Activated CD4-positive, alpha-beta memory T cell treated with anti-CD3 and anti-CD28 coated beads, Interleukin-2, amount 10 ng/mL, durations not matched to agents 7 days and 5 days (primary cell): ENCODE measurements at regions of chr2 and their contacts with region 1.

Region 1: GRCh38 chr2:219498280-219499057 is at the start of gene GMPPA:
- DNase-seq: peak; percentile 97
- H3K4me3 Mint-ChIP-seq: peak within 1 kb of the TSS; percentile 95
- H3K27ac Mint-ChIP-seq: peak within 1 kb of the TSS; percentile 64
- H3K4me1 Mint-ChIP-seq: peaks cover 48% of the 10 kb centered on the region
- H3K27me3 Mint-ChIP-seq: peaks cover 47% of the 10 kb centered on the region
- total RNA-seq, gene GMPPA: 41.0 to 42.3 TPM

Region 2: GRCh38 chr2:219388127-219388844 is 110.2 kb before region 1 on chr2:
- CTCF ChIA-PET with region 1: interaction called, 15 read pairs
- POLR2A ChIA-PET with region 1: interaction called, 8 read pairs
- DNase-seq: peak; percentile 98
- H3K4me3 Mint-ChIP-seq: peak overlapping the region; percentile 70
- H3K27ac Mint-ChIP-seq: peak overlapping the region; percentile 67
- H3K4me1 Mint-ChIP-seq: peaks cover 16% of the 10 kb centered on the region
- H3K27me3 Mint-ChIP-seq: peaks cover 9% of the 10 kb centered on the region

Region 3: GRCh38 chr2:219402665-219403515 is 95.6 kb before region 1 on chr2:
- CTCF ChIA-PET with region 1: interaction called, 12 read pairs
- POLR2A ChIA-PET with region 1: no interaction called
- DNase-seq: peak; percentile 58
- H3K4me3 Mint-ChIP-seq: no peak overlapping the region
- H3K27ac Mint-ChIP-seq: no peak overlapping the region
- H3K4me1 Mint-ChIP-seq: no peaks in the 10 kb centered on the region
- H3K27me3 Mint-ChIP-seq: peaks cover 10% of the 10 kb centered on the region

Region 4: GRCh38 chr2:219469186-219469724 is 29.2 kb before region 1 on chr2:
- CTCF ChIA-PET with region 1: no interaction called
- POLR2A ChIA-PET with region 1: no interaction called
- DNase-seq: no peak
- H3K4me3 Mint-ChIP-seq: no peak overlapping the region
- H3K27ac Mint-ChIP-seq: no peak overlapping the region
- H3K4me1 Mint-ChIP-seq: no peaks in the 10 kb centered on the region
- H3K27me3 Mint-ChIP-seq: no peaks in the 10 kb centered on the region

Region 5: GRCh38 chr2:219484343-219485200 is 13.9 kb before region 1 on chr2:
- CTCF ChIA-PET with region 1: interaction called, 10 read pairs
- POLR2A ChIA-PET with region 1: interaction called, 3 read pairs
- DNase-seq: no peak
- H3K4me3 Mint-ChIP-seq: no peak overlapping the region
- H3K27ac Mint-ChIP-seq: no peak overlapping the region
- H3K4me1 Mint-ChIP-seq: no peaks in the 10 kb centered on the region
- H3K27me3 Mint-ChIP-seq: peaks cover 41% of the 10 kb centered on the region

Region 6: GRCh38 chr2:219509780-219510511 is 11.5 kb after region 1 on chr2:
- CTCF ChIA-PET with region 1: interaction called, 41 read pairs
- POLR2A ChIA-PET with region 1: interaction called, 6 read pairs
- DNase-seq: peak; percentile 45
- H3K4me3 Mint-ChIP-seq: no peak overlapping the region
- H3K27ac Mint-ChIP-seq: no peak overlapping the region
- H3K4me1 Mint-ChIP-seq: peaks cover 12% of the 10 kb centered on the region
- H3K27me3 Mint-ChIP-seq: peaks cover 44% of the 10 kb centered on the region

Region 7: GRCh38 chr2:219543601-219544358 is 45.3 kb after region 1 on chr2 and contains the starts of genes CHPF and TMEM198:
- CTCF ChIA-PET with region 1: interaction called, 15 read pairs
- POLR2A ChIA-PET with region 1: interaction called, 10 read pairs
- DNase-seq: peak; percentile 95
- H3K4me3 Mint-ChIP-seq: peak within 1 kb of the TSS; percentile 78
- H3K27ac Mint-ChIP-seq: peak within 1 kb of the TSS; percentile 74
- H3K4me1 Mint-ChIP-seq: peaks cover 23% of the 10 kb centered on the region
- H3K27me3 Mint-ChIP-seq: peaks cover 17% of the 10 kb centered on the region
- total RNA-seq, gene CHPF: 14.5 to 14.9 TPM
- total RNA-seq, gene TMEM198: 0.95 to 1.0 TPM